ENCODE measurements at regions of chr5 and their contacts with region 1.

Region 1: GRCh38 chr5:141512390-141512910 is 23.6 kb downstream of the PCDHGC5 start:
- DNase-seq: peak; percentile 89
- H3K4me3 Mint-ChIP-seq: peak overlapping the region; percentile 71
- H3K27ac Mint-ChIP-seq: peak overlapping the region; percentile 33
- H3K4me1 Mint-ChIP-seq: peaks cover 27% of the 10 kb centered on the region
- H3K27me3 Mint-ChIP-seq: peaks cover 9% of the 10 kb centered on the region

Region 2: DNA sequence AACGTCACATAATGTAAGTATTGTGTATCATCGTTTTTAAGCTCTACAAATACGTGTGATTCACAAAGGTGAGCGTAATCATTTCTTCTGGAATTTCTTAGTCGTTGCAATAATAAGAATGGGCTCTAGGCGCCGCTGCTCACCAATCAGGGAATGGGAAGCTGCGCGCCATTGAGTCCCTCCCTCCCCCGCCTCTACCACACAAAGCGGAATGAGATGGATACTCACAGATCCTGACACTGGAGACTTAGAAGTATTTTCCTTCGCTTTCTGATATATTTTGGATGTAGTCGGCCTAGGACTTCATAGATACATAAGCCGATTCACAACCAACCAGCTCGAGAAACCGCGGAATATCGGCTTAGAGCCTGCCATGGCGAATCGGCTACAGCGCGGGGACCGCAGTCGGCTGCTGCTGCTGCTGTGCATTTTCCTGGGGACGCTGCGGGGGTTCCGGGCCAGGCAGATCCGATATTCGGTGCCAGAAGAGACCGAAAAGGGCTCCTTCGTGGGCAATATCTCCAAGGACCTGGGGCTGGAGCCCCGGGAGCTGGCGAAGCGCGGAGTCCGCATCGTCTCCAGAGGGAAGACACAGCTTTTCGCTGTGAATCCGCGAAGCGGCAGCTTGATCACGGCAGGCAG is 91.5 kb before region 1 on chr5 and contains the start of gene PCDHGA11:
- CTCF ChIA-PET with region 1: interaction called, 14 read pairs
- DNase-seq: peak; percentile 52
- H3K4me3 Mint-ChIP-seq: peak within 1 kb of the TSS; percentile 76
- H3K27ac Mint-ChIP-seq: peak within 1 kb of the TSS; percentile 77
- H3K4me1 Mint-ChIP-seq: peaks cover 16% of the 10 kb centered on the region
- H3K27me3 Mint-ChIP-seq: peaks cover 69% of the 10 kb centered on the region

Region 3: GRCh38 chr5:141475625-141476131 is 36.8 kb before region 1 on chr5 and contains the start of gene PCDHGC3:
- CTCF ChIA-PET with region 1: interaction called, 10 read pairs
- DNase-seq: peak; percentile 53
- H3K4me3 Mint-ChIP-seq: peak within 1 kb of the TSS; percentile 73
- H3K27ac Mint-ChIP-seq: no peak within 1 kb of the TSS
- H3K4me1 Mint-ChIP-seq: peaks cover 21% of the 10 kb centered on the region
- H3K27me3 Mint-ChIP-seq: peaks cover 63% of the 10 kb centered on the region

Region 4: DNA sequence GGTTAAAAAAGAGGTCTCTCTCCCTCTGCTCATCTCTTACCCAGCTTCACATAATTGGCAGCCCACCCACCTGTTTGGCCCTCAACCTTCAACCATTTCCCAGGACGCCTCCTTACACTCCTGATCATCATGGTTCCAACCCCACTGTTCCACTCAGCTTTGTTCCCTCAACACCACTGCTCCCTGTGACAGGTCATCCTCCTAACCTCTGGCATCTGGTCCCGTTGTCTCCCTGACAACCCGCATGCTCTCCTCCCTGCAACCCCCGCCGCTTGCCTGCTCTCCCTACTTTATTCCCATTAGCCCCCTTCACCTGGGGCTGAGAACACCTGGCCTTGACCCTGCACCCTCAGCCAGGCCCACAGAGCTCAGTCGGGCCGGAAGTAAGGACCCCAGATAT is 10.7 kb before region 1 on chr5:
- CTCF ChIA-PET with region 1: interaction called, 10 read pairs
- DNase-seq: no peak
- H3K4me3 Mint-ChIP-seq: no peak overlapping the region
- H3K27ac Mint-ChIP-seq: no peak overlapping the region
- H3K4me1 Mint-ChIP-seq: no peaks in the 10 kb centered on the region
- H3K27me3 Mint-ChIP-seq: peaks cover 33% of the 10 kb centered on the region

Region 5: GRCh38 chr5:141557681-141558136 is 45.3 kb after region 1 on chr5:
- CTCF ChIA-PET with region 1: interaction called, 11 read pairs
- DNase-seq: peak; percentile 80
- H3K4me3 Mint-ChIP-seq: no peak overlapping the region
- H3K27ac Mint-ChIP-seq: peak overlapping the region; percentile 60
- H3K4me1 Mint-ChIP-seq: peaks cover 14% of the 10 kb centered on the region
- H3K27me3 Mint-ChIP-seq: no peaks in the 10 kb centered on the region

Region 6: GRCh38 chr5:141574122-141574510 is 61.7 kb after region 1 on chr5:
- CTCF ChIA-PET with region 1: no interaction called
- DNase-seq: no peak
- H3K4me3 Mint-ChIP-seq: no peak overlapping the region
- H3K27ac Mint-ChIP-seq: no peak overlapping the region
- H3K4me1 Mint-ChIP-seq: no peaks in the 10 kb centered on the region
- H3K27me3 Mint-ChIP-seq: no peaks in the 10 kb centered on the region